ENCODE measurements at regions of chr1 and their contacts with region 1.

Region 1: GRCh38 chr1:84753516-84754385 is 63.5 kb upstream of the SSX2IP start:
- DNase-seq: peak; percentile 63
- H3K4me3 Mint-ChIP-seq: no peak overlapping the region
- H3K27ac Mint-ChIP-seq: no peak overlapping the region
- H3K4me1 Mint-ChIP-seq: peaks cover 22% of the 10 kb centered on the region
- H3K27me3 Mint-ChIP-seq: no peaks in the 10 kb centered on the region
- CTCF ChIP-seq: peak; percentile 98

Region 2: GRCh38 chr1:83905315-83905907 is 848.3 kb before region 1 on chr1:
- CTCF ChIA-PET with region 1: no interaction called
- POLR2A ChIA-PET with region 1: no interaction called
- intact Hi-C with region 1: loop called (anchors 5 kb)
- DNase-seq: peak; percentile 38
- H3K4me3 Mint-ChIP-seq: no peak overlapping the region
- H3K27ac Mint-ChIP-seq: no peak overlapping the region
- H3K4me1 Mint-ChIP-seq: peaks cover 25% of the 10 kb centered on the region
- H3K27me3 Mint-ChIP-seq: no peaks in the 10 kb centered on the region
- CTCF ChIP-seq: peak; percentile 68

Region 3: GRCh38 chr1:84433258-84434080 is 320.3 kb before region 1 on chr1:
- CTCF ChIA-PET with region 1: interaction called, 121 read pairs
- POLR2A ChIA-PET with region 1: interaction called, 3 read pairs
- intact Hi-C with region 1: no loop called
- DNase-seq: peak; percentile 70
- H3K4me3 Mint-ChIP-seq: no peak overlapping the region
- H3K27ac Mint-ChIP-seq: no peak overlapping the region
- H3K4me1 Mint-ChIP-seq: no peaks in the 10 kb centered on the region
- H3K27me3 Mint-ChIP-seq: no peaks in the 10 kb centered on the region
- CTCF ChIP-seq: peak; percentile 61

Region 4: DNA sequence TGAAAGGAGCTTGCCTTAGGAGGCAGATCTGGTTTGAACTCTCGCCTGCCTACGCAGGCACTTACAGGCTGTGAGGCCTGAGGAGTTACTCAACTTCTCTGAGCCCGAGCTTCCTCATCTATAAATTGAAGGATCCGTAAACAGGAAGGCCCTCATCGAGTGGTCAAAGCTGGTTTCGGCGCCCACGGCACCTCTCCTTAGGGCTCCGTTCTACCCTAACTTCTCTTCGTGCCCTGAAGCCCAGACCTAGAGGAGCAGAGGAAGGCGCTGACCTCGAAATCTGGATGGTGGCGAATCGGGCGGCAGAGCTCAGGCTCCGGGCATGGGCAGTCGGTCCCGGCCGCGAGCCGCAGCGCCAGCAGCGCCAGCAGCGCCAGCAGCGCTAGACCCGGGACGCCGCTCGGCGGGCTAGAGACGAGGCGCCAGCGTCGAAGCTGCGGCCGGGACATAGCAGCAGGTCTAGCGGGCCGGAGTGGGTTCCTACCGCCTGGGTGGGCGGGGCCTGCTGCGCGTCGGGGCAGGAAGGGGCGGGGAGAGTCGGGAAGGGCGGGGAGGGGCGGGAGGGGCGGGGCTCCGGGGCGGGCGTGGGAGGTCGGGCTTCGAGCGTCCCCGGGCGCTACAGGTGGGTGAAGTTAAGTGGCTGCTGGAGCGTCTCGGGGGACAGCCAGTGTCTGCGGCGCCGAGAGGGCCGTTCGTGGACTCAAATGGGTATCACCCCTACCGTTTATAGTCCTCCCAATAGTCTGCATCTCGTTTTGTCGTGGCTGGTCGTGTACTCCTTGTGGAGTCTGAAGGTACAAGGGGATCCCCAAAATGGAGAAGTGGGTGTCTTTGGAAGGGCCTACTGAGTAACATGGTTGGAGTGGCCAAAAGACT is 179.5 kb before region 1 on chr1 and contains the start of gene CTBS:
- CTCF ChIA-PET with region 1: interaction called, 4 read pairs
- POLR2A ChIA-PET with region 1: interaction called, 10 read pairs
- intact Hi-C with region 1: no loop called
- DNase-seq: peak; percentile 79
- H3K4me3 Mint-ChIP-seq: peak within 1 kb of the TSS; percentile 95
- H3K27ac Mint-ChIP-seq: peak within 1 kb of the TSS; percentile 99
- H3K4me1 Mint-ChIP-seq: peaks cover 36% of the 10 kb centered on the region
- H3K27me3 Mint-ChIP-seq: no peaks in the 10 kb centered on the region
- CTCF ChIP-seq: no peak
- total RNA-seq, gene CTBS: 14.0 and 20.9 TPM in 2 replicates

Region 5: GRCh38 chr1:84653130-84653677 is 100.5 kb before region 1 on chr1:
- CTCF ChIA-PET with region 1: interaction called, 13 read pairs
- POLR2A ChIA-PET with region 1: no interaction called
- intact Hi-C with region 1: loop called (anchors 1 kb)
- DNase-seq: no peak
- H3K4me3 Mint-ChIP-seq: no peak overlapping the region
- H3K27ac Mint-ChIP-seq: no peak overlapping the region
- H3K4me1 Mint-ChIP-seq: no peaks in the 10 kb centered on the region
- H3K27me3 Mint-ChIP-seq: no peaks in the 10 kb centered on the region
- CTCF ChIP-seq: no peak

Region 6: GRCh38 chr1:84869720-84870119 is 116.0 kb after region 1 on chr1:
- CTCF ChIA-PET with region 1: no interaction called
- POLR2A ChIA-PET with region 1: no interaction called
- intact Hi-C with region 1: no loop called
- DNase-seq: no peak
- H3K4me3 Mint-ChIP-seq: no peak overlapping the region
- H3K27ac Mint-ChIP-seq: no peak overlapping the region
- H3K4me1 Mint-ChIP-seq: no peaks in the 10 kb centered on the region
- H3K27me3 Mint-ChIP-seq: no peaks in the 10 kb centered on the region
- CTCF ChIP-seq: no peak

Region 7: DNA sequence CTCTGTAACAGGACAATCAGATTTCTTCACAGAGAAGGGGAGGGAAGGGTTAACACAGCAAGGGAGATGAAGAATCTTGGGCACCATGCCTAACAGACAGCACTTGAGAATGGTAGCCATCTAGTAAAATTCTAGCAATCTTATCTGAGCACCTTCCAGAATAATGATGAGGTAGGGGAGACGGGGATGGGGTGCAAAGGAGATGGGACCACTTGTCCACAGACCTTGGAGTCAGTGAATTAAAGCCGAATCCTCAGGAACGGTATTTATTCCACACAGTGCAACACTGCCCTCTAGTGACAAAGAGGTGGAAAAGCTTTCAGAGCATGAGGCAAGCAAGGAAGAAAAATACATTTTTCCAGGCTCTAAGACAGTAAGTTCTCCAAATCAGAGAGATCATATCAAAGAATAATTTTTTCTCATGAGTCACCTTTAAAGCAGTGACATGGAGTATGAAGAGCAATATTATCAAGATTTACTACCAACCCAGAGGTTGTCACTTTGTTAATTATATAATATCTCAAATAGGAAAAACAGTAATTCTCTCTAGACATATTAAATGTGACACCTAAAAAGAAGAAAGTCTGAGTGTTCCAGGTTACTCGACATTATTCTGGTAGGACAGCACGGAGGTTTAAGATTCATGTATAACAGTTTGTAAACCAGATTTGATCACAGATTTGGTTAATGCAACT is 182.5 kb after region 1 on chr1:
- CTCF ChIA-PET with region 1: interaction called, 31 read pairs
- POLR2A ChIA-PET with region 1: no interaction called
- intact Hi-C with region 1: loop called (anchors 2 kb)
- DNase-seq: peak; percentile 78
- H3K4me3 Mint-ChIP-seq: no peak overlapping the region
- H3K27ac Mint-ChIP-seq: no peak overlapping the region
- H3K4me1 Mint-ChIP-seq: no peaks in the 10 kb centered on the region
- H3K27me3 Mint-ChIP-seq: no peaks in the 10 kb centered on the region
- CTCF ChIP-seq: peak; percentile 89

Measured in MCF 10A (cell line).